WTC11 (cell line): ENCODE measurements at regions of chr20 and their contacts with region 1.

Region 1: DNA sequence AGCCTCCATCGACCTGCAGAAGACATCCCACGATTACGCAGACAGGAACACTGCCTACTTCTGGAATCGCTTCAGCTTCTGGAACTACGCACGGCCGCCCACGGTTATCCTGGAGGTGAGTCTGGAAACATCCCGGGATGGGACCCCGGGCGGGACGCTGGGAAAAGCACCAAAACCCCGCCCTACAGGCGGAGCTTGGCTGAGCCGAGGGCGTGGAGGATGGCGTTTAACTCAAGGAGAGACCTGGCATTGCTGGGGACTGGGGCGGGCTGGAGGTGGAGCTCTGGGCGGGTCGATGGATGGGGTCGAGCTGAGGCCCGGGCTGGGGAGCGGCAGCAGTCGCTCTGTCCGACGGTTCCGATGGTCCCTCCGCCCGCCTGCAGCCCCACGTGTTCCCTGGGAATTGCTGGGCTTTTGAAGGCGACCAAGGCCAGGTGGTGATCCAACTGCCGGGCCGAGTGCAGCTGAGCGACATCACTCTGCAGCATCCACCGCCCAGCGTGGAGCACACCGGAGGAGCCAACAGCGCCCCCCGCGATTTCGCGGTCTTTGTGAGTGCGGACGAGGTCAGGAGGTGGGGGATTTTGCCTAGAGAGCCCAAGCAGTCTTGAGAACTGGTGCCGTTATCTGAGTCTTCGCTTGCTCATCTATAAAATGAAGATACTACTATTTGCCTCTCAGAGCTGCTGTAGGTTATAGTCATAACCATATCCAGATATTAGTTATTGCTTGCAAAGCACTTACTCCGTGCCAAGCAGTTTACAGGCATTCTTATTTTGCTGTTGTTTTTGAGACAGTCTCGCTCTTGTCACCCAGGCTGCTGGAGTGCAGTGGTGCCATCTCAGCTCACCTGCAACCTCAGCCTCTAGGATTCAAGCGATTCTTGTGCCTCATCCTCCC is 3.8 kb downstream of the SPAG4 start:
- DNase-seq: peak; percentile 96
- ATAC-seq: peak; percentile 72
- H3K4me3 Mint-ChIP-seq: peak overlapping the region; percentile 89
- H3K27ac Mint-ChIP-seq: peak overlapping the region; percentile 86; the same call in 1 of the 2 replicates
- H3K4me1 Mint-ChIP-seq: peaks cover 15% of the 10 kb centered on the region
- H3K27me3 Mint-ChIP-seq: peaks cover 18% of the 10 kb centered on the region
- CTCF ChIP-seq: no peak; the same call in 1 of the 2 replicates

Region 2: DNA sequence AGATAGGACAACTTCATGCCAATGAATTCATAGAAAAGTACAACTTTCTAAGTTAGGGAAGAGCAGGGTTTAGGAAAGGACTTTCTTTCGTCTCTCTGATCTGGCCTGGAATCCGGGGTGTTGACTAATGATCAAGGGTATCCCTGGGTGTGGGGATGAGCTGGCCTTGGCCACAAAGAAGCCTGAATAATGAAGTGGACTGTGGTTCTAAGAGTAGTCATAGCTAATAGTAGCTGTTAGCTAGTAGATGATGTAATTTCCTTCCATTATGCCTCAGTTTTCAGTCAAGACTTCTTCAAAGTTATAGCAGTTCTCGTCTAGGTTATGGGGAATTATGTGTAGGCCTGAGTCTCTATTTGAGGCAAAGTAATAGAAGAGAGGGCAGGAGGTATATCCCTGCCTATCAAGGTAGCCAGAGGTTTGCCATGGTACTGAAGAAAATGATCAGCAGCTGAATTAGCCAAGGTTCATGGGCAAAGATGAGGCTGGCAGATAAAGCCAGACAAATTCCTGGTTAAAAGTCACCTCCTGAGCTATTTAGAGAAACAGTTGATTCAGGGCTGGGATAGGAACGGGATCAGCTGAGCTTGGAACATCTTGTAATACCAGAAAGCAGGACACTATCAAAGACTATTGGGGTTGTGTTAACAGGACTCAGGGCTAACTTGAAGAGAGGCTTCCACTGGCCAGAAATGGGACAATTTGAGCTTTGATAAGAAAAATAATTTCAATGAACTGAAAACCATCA is 508.1 kb before region 1 on chr20:
- CTCF ChIA-PET with region 1: no interaction called
- POLR2A ChIA-PET with region 1: no interaction called
- DNase-seq: no peak
- ATAC-seq: no peak
- H3K4me3 Mint-ChIP-seq: no peak overlapping the region
- H3K27ac Mint-ChIP-seq: no peak overlapping the region
- H3K4me1 Mint-ChIP-seq: no peaks in the 10 kb centered on the region
- H3K27me3 Mint-ChIP-seq: no peaks in the 10 kb centered on the region
- CTCF ChIP-seq: no peak

Region 3: DNA sequence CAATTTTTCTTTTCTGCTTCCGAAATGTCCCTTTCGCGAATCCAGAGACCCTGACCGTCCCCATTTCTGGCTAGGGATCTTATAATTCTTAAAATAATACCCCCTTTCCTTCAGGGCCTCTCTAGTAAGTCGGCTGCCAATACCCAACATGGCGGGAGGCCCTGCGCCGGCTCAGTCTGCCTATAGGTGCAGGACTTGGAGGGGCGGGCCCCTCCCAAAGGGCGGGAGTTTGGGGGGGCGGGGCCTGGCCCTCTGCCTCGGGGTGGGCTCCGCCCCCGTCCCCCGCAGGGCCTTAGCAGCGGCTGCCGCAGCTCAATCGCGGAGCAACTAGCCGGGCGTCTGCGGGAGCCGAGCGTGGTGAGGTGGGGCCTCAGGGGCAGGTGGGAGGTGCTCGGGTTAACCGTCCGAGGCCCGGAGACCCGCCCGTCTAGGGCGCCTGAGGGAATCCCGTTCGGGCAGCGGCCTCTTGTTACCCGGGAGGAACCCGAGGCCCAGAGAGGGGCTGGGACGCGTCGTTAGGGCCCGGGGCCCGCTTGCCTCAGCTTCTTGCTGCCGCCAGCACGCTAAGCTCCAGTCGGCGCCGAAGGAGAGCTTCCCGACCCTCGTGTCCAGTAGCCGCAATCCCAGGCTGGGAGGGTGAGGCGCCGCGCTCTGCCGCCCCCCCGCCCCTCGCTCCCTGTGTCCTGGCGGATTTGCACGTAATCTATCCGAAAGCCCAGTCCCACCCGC is 164.4 kb before region 1 on chr20 and contains the start of gene CEP250:
- CTCF ChIA-PET with region 1: interaction called, 10 read pairs
- POLR2A ChIA-PET with region 1: interaction called, 6 read pairs
- DNase-seq: peak; percentile 97
- ATAC-seq: peak; percentile 92
- H3K4me3 Mint-ChIP-seq: peak within 1 kb of the TSS; percentile 90
- H3K27ac Mint-ChIP-seq: peak within 1 kb of the TSS; percentile 99
- H3K4me1 Mint-ChIP-seq: peaks cover 32% of the 10 kb centered on the region
- H3K27me3 Mint-ChIP-seq: no peaks in the 10 kb centered on the region
- CTCF ChIP-seq: no peak
- total RNA-seq, gene CEP250: 63.1 to 66.9 TPM (median 65.8 TPM) in 3 replicates

Region 4: DNA sequence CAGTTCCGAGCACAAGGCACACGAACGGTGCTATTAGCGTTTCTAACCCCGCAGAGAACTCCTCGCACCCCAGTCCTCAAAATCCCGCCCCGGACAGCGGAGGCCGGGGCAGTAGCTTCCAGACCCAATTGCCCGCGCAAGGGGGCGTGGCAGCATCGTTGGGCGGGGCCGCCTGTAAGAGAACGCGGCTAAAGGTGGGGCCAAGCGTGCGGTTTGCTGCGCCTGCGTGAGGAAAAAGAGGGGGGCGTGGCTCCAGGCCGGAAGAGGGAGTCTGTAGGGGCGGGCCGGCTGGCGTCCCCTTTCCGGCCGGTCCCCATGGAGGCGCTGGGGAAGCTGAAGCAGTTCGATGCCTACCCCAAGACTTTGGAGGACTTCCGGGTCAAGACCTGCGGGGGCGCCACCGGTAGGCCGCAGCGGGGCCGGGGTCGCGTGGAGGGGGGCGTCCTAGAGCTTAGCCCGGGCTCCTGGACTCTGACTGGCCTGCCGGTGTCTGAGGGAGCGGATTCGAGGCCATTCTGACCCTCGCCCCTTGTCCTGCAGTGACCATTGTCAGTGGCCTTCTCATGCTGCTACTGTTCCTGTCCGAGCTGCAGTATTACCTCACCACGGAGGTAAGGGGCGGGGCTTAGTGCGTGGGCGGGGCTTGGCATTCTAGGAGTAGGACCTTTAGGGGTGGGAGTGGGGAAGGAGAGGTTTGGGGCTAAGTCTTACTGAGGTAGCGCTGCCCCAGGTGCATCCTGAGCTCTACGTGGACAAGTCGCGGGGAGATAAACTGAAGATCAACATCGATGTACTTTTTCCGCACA is 77.5 kb before region 1 on chr20 and contains the start of gene ERGIC3:
- CTCF ChIA-PET with region 1: interaction called, 41 read pairs
- POLR2A ChIA-PET with region 1: interaction called, 7 read pairs
- DNase-seq: peak; percentile 100
- ATAC-seq: peak; percentile 85
- H3K4me3 Mint-ChIP-seq: peak within 1 kb of the TSS; percentile 83
- H3K27ac Mint-ChIP-seq: peak within 1 kb of the TSS; percentile 88
- H3K4me1 Mint-ChIP-seq: peaks cover 16% of the 10 kb centered on the region
- H3K27me3 Mint-ChIP-seq: no peaks in the 10 kb centered on the region; the same call in 1 of the 2 replicates
- CTCF ChIP-seq: no peak
- total RNA-seq, gene ERGIC3: 168 to 181 TPM (median 179 TPM) in 3 replicates

Region 5: GRCh38 chr20:35601008-35601973 is 18.2 kb before region 1 on chr20:
- CTCF ChIA-PET with region 1: interaction called, 62 read pairs
- POLR2A ChIA-PET with region 1: interaction called, 10 read pairs
- DNase-seq: peak; percentile 80
- ATAC-seq: peak; percentile 63
- H3K4me3 Mint-ChIP-seq: peak overlapping the region; percentile 76
- H3K27ac Mint-ChIP-seq: no peak overlapping the region
- H3K4me1 Mint-ChIP-seq: peaks cover 9% of the 10 kb centered on the region
- H3K27me3 Mint-ChIP-seq: peaks cover 74% of the 10 kb centered on the region
- CTCF ChIP-seq: no peak

Region 6: GRCh38 chr20:35636095-35636494 is 16.6 kb after region 1 on chr20:
- CTCF ChIA-PET with region 1: interaction called, 13 read pairs
- POLR2A ChIA-PET with region 1: no interaction called
- DNase-seq: no peak
- ATAC-seq: no peak
- H3K4me3 Mint-ChIP-seq: no peak overlapping the region
- H3K27ac Mint-ChIP-seq: peak overlapping the region; percentile 9; the same call in 1 of the 2 replicates
- H3K4me1 Mint-ChIP-seq: peaks cover 27% of the 10 kb centered on the region
- H3K27me3 Mint-ChIP-seq: no peaks in the 10 kb centered on the region
- CTCF ChIP-seq: no peak

Region 7: DNA sequence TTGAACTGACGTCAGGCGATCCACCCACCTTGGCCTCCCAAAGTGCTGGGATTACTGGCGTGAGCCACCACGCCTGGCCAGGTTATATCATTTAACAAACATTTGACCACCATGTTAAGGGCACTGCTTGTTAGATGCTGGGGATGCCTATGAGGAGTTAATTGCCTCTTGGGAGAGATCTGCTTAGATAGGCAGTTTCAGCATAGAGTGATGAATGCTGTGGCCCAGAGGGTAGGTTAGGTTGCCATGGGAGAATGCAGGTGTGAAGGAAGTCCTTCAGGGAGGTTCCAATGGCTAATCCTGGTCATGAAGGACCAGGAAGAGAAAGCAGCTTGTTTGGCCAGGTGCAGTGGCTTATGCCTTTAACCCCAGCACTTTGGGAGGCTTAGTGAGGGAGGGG is 169.3 kb after region 1 on chr20:
- CTCF ChIA-PET with region 1: no interaction called
- POLR2A ChIA-PET with region 1: no interaction called
- DNase-seq: no peak
- ATAC-seq: no peak
- H3K4me3 Mint-ChIP-seq: no peak overlapping the region
- H3K27ac Mint-ChIP-seq: peak overlapping the region; percentile 62
- H3K4me1 Mint-ChIP-seq: no peaks in the 10 kb centered on the region; the same call in 1 of the 2 replicates
- H3K27me3 Mint-ChIP-seq: no peaks in the 10 kb centered on the region
- CTCF ChIP-seq: no peak

Region 8: GRCh38 chr20:35947489-35947888 is 328.0 kb after region 1 on chr20:
- CTCF ChIA-PET with region 1: interaction called, 25 read pairs
- POLR2A ChIA-PET with region 1: no interaction called
- DNase-seq: peak; percentile 67
- ATAC-seq: peak; percentile 96
- H3K4me3 Mint-ChIP-seq: no peak overlapping the region
- H3K27ac Mint-ChIP-seq: peak overlapping the region; percentile 89
- H3K4me1 Mint-ChIP-seq: peaks cover 5% of the 10 kb centered on the region
- H3K27me3 Mint-ChIP-seq: no peaks in the 10 kb centered on the region
- CTCF ChIP-seq: 0 out of 2 replicates have a peak, but pooled peaks have one; percentile 32